Panc1 (cell line): ENCODE measurements at regions of chr18 and their contacts with region 1.

Region 1: GRCh38 chr18:70289351-70290330 is 796 bp downstream of the SOCS6 start:
- DNase-seq: no peak
- ATAC-seq: peak; percentile 23
- H3K4me3 ChIP-seq: peak overlapping the region; percentile 77 to 90
- H3K27ac ChIP-seq: peak overlapping the region; percentile 98
- H3K4me1 ChIP-seq: peaks cover 26% of the 10 kb centered on the region
- H3K27me3 ChIP-seq: no peaks in the 10 kb centered on the region
- CTCF ChIP-seq: no peak

Region 2: DNA sequence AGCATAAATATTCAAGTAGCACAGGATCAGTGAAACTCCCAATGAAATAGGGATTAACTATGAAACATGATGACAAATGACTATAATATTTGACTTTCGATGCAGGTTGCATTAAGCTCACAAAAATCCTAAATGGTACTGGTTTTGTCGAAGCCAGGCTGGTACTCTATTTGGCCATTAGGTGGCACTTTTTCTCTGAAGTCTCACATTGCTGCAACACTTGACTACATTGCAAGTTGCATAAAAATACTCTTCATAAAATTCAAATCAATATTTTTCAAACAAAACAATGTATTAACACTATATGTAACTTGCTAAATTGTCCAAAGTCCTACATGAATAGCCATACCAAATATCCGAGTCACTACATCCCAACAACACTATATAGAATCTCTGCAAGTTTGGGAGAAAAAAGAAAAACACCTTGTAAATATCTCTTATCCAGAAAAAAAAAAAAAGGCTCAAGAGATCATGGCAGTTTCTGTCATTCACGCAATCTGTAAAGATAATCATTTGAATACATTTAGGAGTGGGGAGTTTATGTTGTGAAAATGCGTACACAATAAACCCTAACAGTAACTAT is 93.7 kb before region 1 on chr18:
- CTCF ChIA-PET with region 1: no interaction called
- POLR2A ChIA-PET with region 1: no interaction called
- in situ Hi-C with region 1: no loop called
- intact Hi-C with region 1: loop called (anchors 5 kb)
- DNase-seq: no peak
- ATAC-seq: no peak
- H3K4me3 ChIP-seq: no peak overlapping the region
- H3K27ac ChIP-seq: peak overlapping the region; percentile 80
- H3K4me1 ChIP-seq: peaks cover 22% of the 10 kb centered on the region
- H3K27me3 ChIP-seq: no peaks in the 10 kb centered on the region
- CTCF ChIP-seq: peak; percentile 57; the same call in 1 of the 2 replicates

Region 3: GRCh38 chr18:70373042-70373519 is 83.4 kb after region 1 on chr18:
- CTCF ChIA-PET with region 1: no interaction called
- POLR2A ChIA-PET with region 1: no interaction called
- in situ Hi-C with region 1: no loop called
- intact Hi-C with region 1: loop called (anchors 10 kb)
- DNase-seq: peak; percentile 52
- ATAC-seq: peak; percentile 74
- H3K4me3 ChIP-seq: peak overlapping the region in 1 of 2 experiments; percentile 25; a peak in 2 of 4 replicates
- H3K27ac ChIP-seq: peak overlapping the region; percentile 95
- H3K4me1 ChIP-seq: peaks cover 45% of the 10 kb centered on the region
- H3K27me3 ChIP-seq: no peaks in the 10 kb centered on the region
- CTCF ChIP-seq: no peak